ENCODE measurements at regions of chr1 and their contacts with region 1.

Region 1: DNA sequence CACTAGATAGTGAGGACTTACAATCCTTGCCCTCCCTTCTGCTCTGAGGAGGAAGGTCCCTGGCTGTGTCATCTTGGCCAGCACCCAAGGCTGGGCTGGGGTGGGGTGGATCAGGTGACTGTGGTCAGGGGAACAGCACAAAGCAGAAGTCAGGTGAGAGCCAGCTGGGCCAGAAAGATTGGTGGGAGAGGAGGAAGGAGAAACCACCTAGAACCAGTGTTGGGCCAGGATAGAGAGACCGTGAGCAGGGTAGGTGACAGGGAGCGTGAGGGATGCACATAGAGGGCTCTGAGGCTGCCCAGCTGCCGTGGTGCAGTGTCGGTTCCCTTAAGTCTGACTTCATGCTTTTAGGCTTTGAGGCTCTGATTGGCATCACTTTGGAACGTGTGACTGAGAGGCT is 22.7 kb downstream of the NCF2 start:
- DNase-seq: peak; percentile 71
- H3K4me3 Mint-ChIP-seq: no peak overlapping the region
- H3K27ac Mint-ChIP-seq: peak overlapping the region; percentile 10
- H3K4me1 Mint-ChIP-seq: peaks cover 32% of the 10 kb centered on the region
- H3K27me3 Mint-ChIP-seq: no peaks in the 10 kb centered on the region
- CTCF ChIP-seq: no peak

Region 2: GRCh38 chr1:183209533-183210158 is 357.9 kb before region 1 on chr1:
- CTCF ChIA-PET with region 1: no interaction called
- POLR2A ChIA-PET with region 1: no interaction called
- intact Hi-C with region 1: no loop called
- DNase-seq: peak; percentile 96
- H3K4me3 Mint-ChIP-seq: no peak overlapping the region
- H3K27ac Mint-ChIP-seq: peak overlapping the region; percentile 94
- H3K4me1 Mint-ChIP-seq: peaks cover 46% of the 10 kb centered on the region
- H3K27me3 Mint-ChIP-seq: no peaks in the 10 kb centered on the region
- CTCF ChIP-seq: no peak

Region 3: GRCh38 chr1:183580281-183580682 is 12.7 kb after region 1 on chr1:
- CTCF ChIA-PET with region 1: interaction called, 20 read pairs
- POLR2A ChIA-PET with region 1: interaction called, 6 read pairs
- intact Hi-C with region 1: no loop called
- DNase-seq: peak; percentile 50
- H3K4me3 Mint-ChIP-seq: no peak overlapping the region
- H3K27ac Mint-ChIP-seq: no peak overlapping the region
- H3K4me1 Mint-ChIP-seq: peaks cover 9% of the 10 kb centered on the region
- H3K27me3 Mint-ChIP-seq: no peaks in the 10 kb centered on the region
- CTCF ChIP-seq: no peak